ENCODE measurements at regions of chr11 and their contacts with region 1.

Region 1: GRCh38 chr11:35617687-35618496 is at the start of gene FJX1:
- DNase-seq: peak; percentile 75
- ATAC-seq: peak; percentile 69
- total RNA-seq, gene FJX1: 3.9 TPM

Region 2: GRCh38 chr11:35541621-35542375 is 76.1 kb before region 1 on chr11:
- intact Hi-C with region 1: no loop called
- DNase-seq: peak; percentile 76
- ATAC-seq: peak; percentile 95

Region 3: GRCh38 chr11:36265793-36266628 is 648.1 kb after region 1 on chr11:
- intact Hi-C with region 1: loop called (anchors 10 kb)
- DNase-seq: peak; percentile 75
- ATAC-seq: peak; percentile 72